ENCODE measurements at regions of chr6 and their contacts with region 1.

Region 1: GRCh38 chr6:105733565-105734162 is 330.8 kb upstream of the PREP start:
- DNase-seq: no peak
- H3K4me3 ChIP-seq: no peak overlapping the region
- H3K27ac ChIP-seq: no peak overlapping the region
- H3K4me1 ChIP-seq: no peaks in the 10 kb centered on the region
- H3K27me3 ChIP-seq: no peaks in the 10 kb centered on the region
- CTCF ChIP-seq: peak; percentile 59 to 62

Region 2: DNA sequence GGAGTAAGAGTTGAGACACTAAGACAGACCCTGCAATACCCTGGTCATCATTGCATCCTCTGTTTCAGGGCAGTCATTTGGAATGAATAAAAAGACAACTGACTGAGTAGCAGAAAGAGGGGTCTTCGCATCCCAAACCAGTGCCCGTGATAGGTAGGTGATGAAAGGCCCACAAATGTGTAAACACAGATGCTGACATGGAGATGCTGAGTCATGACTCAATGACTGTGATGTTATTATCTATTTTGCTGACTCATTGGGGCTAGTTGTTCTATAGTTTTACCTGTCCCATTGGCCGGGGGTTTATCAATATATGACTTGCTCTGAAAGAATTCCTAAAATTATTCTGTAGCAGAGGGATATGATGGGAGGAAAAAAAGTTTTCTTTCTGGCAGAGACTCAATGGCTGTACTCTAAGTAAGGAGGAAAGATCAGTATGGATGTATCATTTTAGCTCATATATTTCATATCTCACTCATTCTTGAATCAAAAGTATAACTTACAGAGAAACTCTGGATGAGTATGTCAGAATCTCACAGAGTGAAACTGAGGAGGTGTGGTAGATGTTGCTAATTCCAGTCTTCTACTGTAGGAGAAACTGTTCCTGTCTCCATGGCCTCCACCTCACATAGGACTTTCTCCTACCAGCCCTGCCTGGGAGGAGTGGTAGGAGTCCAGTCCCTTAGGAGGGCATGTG is 210.9 kb before region 1 on chr6:
- CTCF ChIA-PET with region 1: no interaction called
- dilution Hi-C with region 1: no loop called
- in situ Hi-C with region 1: no loop called
- intact Hi-C with region 1: loop called (anchors 1 kb)
- DNase-seq: peak; percentile 70
- H3K4me3 ChIP-seq: no peak overlapping the region
- H3K27ac ChIP-seq: peak overlapping the region; percentile 44
- H3K4me1 ChIP-seq: peaks cover 9% of the 10 kb centered on the region
- H3K27me3 ChIP-seq: no peaks in the 10 kb centered on the region
- CTCF ChIP-seq: no peak

Region 3: GRCh38 chr6:105793130-105793529 is 59.5 kb after region 1 on chr6:
- CTCF ChIA-PET with region 1: no interaction called
- dilution Hi-C with region 1: no loop called
- in situ Hi-C with region 1: no loop called
- intact Hi-C with region 1: loop called (anchors 1 kb)
- DNase-seq: no peak
- H3K4me3 ChIP-seq: no peak overlapping the region
- H3K27ac ChIP-seq: no peak overlapping the region
- H3K4me1 ChIP-seq: no peaks in the 10 kb centered on the region
- H3K27me3 ChIP-seq: no peaks in the 10 kb centered on the region
- CTCF ChIP-seq: peak in 1 of 2 donors; percentile 18

Region 4: GRCh38 chr6:105835373-105835772 is 101.7 kb after region 1 on chr6:
- CTCF ChIA-PET with region 1: no interaction called
- dilution Hi-C with region 1: no loop called
- in situ Hi-C with region 1: no loop called
- intact Hi-C with region 1: no loop called
- DNase-seq: peak; percentile 64
- H3K4me3 ChIP-seq: no peak overlapping the region
- H3K27ac ChIP-seq: no peak overlapping the region
- H3K4me1 ChIP-seq: peaks cover 12% of the 10 kb centered on the region
- H3K27me3 ChIP-seq: no peaks in the 10 kb centered on the region
- CTCF ChIP-seq: peak; percentile 33 to 56

Region 5: GRCh38 chr6:105992315-105992961 is 258.8 kb after region 1 on chr6:
- CTCF ChIA-PET with region 1: no interaction called
- dilution Hi-C with region 1: no loop called
- in situ Hi-C with region 1: no loop called
- intact Hi-C with region 1: loop called (anchors 5 kb)
- DNase-seq: peak; percentile 67
- H3K4me3 ChIP-seq: peak overlapping the region; percentile 61 to 76 (median 62)
- H3K27ac ChIP-seq: peak overlapping the region; percentile 67
- H3K4me1 ChIP-seq: peaks cover 25% of the 10 kb centered on the region
- H3K27me3 ChIP-seq: no peaks in the 10 kb centered on the region
- CTCF ChIP-seq: no peak

Region 6: GRCh38 chr6:106223300-106223930 is 489.8 kb after region 1 on chr6:
- CTCF ChIA-PET with region 1: interaction called, 3 read pairs
- dilution Hi-C with region 1: no loop called
- in situ Hi-C with region 1: loop called in 1 of 2 experiments (anchors 25 kb)
- intact Hi-C with region 1: loop called (anchors 1 kb)
- DNase-seq: peak; percentile 58
- H3K4me3 ChIP-seq: no peak overlapping the region
- H3K27ac ChIP-seq: no peak overlapping the region
- H3K4me1 ChIP-seq: no peaks in the 10 kb centered on the region
- H3K27me3 ChIP-seq: no peaks in the 10 kb centered on the region
- CTCF ChIP-seq: peak; percentile 53 to 61

Region 7: GRCh38 chr6:106275692-106276091 is 542.0 kb after region 1 on chr6:
- CTCF ChIA-PET with region 1: no interaction called
- dilution Hi-C with region 1: no loop called
- in situ Hi-C with region 1: loop called in 1 of 2 experiments (anchors 25 kb)
- intact Hi-C with region 1: no loop called
- DNase-seq: no peak
- H3K4me3 ChIP-seq: no peak overlapping the region
- H3K27ac ChIP-seq: no peak overlapping the region
- H3K4me1 ChIP-seq: peaks cover 4% of the 10 kb centered on the region
- H3K27me3 ChIP-seq: no peaks in the 10 kb centered on the region
- CTCF ChIP-seq: no peak